WTC11 (cell line): ENCODE measurements at regions of chr18 and their contacts with region 1.

Region 1: DNA sequence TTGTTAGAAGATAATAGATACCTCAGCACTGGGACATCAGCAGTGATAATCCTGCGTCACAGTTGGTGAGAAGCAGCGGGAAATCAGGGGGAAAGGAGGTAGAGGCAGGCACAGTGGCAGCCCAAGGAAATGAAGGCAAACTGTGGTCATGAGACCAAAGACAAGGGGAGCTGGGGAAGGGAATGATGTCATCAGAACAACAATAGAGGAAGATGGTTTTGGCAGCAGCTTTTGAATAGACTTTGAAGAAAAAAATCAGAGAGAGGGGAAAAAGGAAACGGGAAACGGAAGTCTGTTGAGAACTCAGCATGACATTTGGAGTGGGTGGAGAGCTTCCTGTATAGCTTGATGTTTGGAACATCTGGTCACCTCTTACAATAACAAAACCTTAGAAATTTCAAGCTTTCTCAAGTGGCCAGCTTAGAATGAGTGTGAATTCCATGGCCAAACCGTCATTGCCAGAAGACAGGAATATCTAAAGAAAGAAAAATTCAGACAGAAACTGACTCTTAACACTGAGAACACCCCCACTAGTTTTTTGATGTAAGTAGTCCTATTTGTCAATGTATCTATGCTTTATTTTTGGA is 18.4 kb upstream of the YES1 start:
- DNase-seq: no peak
- ATAC-seq: peak; percentile 45
- H3K4me3 Mint-ChIP-seq: peak overlapping the region; percentile 15
- H3K27ac Mint-ChIP-seq: peak overlapping the region; percentile 66
- H3K4me1 Mint-ChIP-seq: peaks cover 22% of the 10 kb centered on the region
- H3K27me3 Mint-ChIP-seq: peaks cover 7% of the 10 kb centered on the region
- CTCF ChIP-seq: no peak

Region 2: GRCh38 chr18:623761-624620 is 206.4 kb before region 1 on chr18:
- CTCF ChIA-PET with region 1: interaction called, 19 read pairs
- POLR2A ChIA-PET with region 1: no interaction called
- DNase-seq: peak; percentile 81
- ATAC-seq: peak; percentile 99
- H3K4me3 Mint-ChIP-seq: no peak overlapping the region
- H3K27ac Mint-ChIP-seq: no peak overlapping the region
- H3K4me1 Mint-ChIP-seq: peaks cover 9% of the 10 kb centered on the region
- H3K27me3 Mint-ChIP-seq: no peaks in the 10 kb centered on the region
- CTCF ChIP-seq: peak; percentile 36; the same call in 1 of the 2 replicates

Region 3: DNA sequence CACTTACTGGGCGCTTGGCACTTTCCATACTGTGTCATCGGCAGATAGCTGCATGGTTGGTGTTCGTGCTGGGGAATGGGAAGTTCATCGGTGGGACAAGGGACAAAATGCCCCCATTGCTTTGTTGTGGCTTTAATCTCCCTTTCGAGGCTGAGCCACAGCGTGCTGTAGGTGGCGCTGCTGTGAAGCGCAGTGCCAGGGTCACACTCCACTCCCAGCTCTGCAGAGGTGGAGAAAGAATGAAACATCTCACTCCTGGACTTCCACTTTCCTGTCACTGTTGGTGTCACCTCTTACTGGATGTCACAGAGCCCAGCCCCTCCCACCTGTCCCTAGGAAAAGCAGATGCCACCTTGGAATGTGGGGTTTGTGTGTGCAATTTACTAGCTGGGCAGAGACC is 164.2 kb before region 1 on chr18:
- CTCF ChIA-PET with region 1: interaction called, 10 read pairs
- POLR2A ChIA-PET with region 1: no interaction called
- DNase-seq: peak; percentile 55
- ATAC-seq: peak; percentile 94
- H3K4me3 Mint-ChIP-seq: no peak overlapping the region
- H3K27ac Mint-ChIP-seq: no peak overlapping the region
- H3K4me1 Mint-ChIP-seq: no peaks in the 10 kb centered on the region
- H3K27me3 Mint-ChIP-seq: no peaks in the 10 kb centered on the region
- CTCF ChIP-seq: peak; percentile 38; the same call in 1 of the 2 replicates

Region 4: GRCh38 chr18:712401-713134 is 117.8 kb before region 1 on chr18 and contains the start of gene ENOSF1:
- CTCF ChIA-PET with region 1: interaction called, 50 read pairs
- POLR2A ChIA-PET with region 1: interaction called, 5 read pairs
- DNase-seq: peak; percentile 95
- ATAC-seq: peak; percentile 95
- H3K4me3 Mint-ChIP-seq: peak within 1 kb of the TSS; percentile 63
- H3K27ac Mint-ChIP-seq: no peak within 1 kb of the TSS
- H3K4me1 Mint-ChIP-seq: peaks cover 8% of the 10 kb centered on the region
- H3K27me3 Mint-ChIP-seq: no peaks in the 10 kb centered on the region; the same call in 1 of the 2 replicates
- CTCF ChIP-seq: peak; percentile 91
- total RNA-seq, gene ENOSF1: 44.1 to 52.9 TPM (median 44.6 TPM) in 3 replicates

Region 5: GRCh38 chr18:812376-813171 is 17.8 kb before region 1 on chr18:
- CTCF ChIA-PET with region 1: interaction called, 10 read pairs
- POLR2A ChIA-PET with region 1: no interaction called
- DNase-seq: peak; percentile 83
- ATAC-seq: peak; percentile 83
- H3K4me3 Mint-ChIP-seq: peak overlapping the region; percentile 95
- H3K27ac Mint-ChIP-seq: peak overlapping the region; percentile 100
- H3K4me1 Mint-ChIP-seq: peaks cover 44% of the 10 kb centered on the region
- H3K27me3 Mint-ChIP-seq: no peaks in the 10 kb centered on the region; the same call in 1 of the 2 replicates
- CTCF ChIP-seq: no peak

Region 6: DNA sequence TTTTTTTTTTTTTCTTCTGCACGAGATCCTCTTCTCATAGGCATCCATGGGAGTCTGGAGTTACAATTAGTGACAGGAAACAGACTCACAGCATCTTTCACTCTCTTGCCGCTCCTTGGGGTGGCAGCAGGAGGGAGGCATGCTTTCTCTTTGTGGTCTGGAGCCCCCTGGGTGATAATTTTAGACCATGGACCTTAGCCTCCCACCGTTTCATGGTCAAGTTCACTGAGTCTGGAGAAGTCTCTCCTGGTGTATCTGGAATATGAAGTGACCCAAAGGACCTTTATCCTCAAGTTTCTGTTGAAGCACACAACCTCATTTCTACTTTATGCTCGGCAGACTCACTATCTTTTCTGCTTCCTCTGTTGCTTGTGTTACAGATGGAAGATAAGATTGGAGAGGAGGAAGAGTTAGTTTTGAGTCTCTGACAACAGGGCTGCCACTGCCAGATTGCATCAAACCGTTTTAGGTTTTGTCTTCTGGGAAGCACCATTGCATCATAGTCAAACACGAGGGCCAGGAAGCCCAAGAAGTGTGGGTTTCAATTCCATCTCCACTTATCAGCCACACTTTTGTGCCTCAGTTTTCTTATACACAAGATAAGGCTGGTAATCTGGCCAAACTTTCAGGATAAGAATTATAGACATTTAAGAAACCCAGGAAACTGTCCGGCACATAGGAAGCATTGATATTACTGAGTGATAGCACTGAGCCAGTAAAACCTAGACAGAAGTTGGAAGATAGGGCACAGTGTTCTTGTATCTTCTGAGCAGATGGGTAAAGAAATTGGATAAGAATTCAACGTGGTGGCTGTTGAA is 136.6 kb after region 1 on chr18:
- CTCF ChIA-PET with region 1: no interaction called
- POLR2A ChIA-PET with region 1: no interaction called
- DNase-seq: no peak
- ATAC-seq: no peak
- H3K4me3 Mint-ChIP-seq: no peak overlapping the region
- H3K27ac Mint-ChIP-seq: no peak overlapping the region
- H3K4me1 Mint-ChIP-seq: peaks cover under 1% of the 10 kb centered on the region
- H3K27me3 Mint-ChIP-seq: peaks cover 5% of the 10 kb centered on the region
- CTCF ChIP-seq: no peak